ENCODE measurements at regions of chr2 and their contacts with region 1.

Region 1: GRCh38 chr2:241598480-241598879 is 38.5 kb downstream of the THAP4 start:
- DNase-seq: no peak
- H3K4me3 ChIP-seq: no peak overlapping the region
- H3K27ac ChIP-seq: no peak overlapping the region
- H3K4me1 ChIP-seq: no peaks in the 10 kb centered on the region
- H3K27me3 ChIP-seq: no peaks in the 10 kb centered on the region
- CTCF ChIP-seq: peak in 2 of 3 experiments; percentile 13 to 60

Region 2: GRCh38 chr2:241489733-241490680 is 108.5 kb before region 1 on chr2:
- dilution Hi-C with region 1: loop called (anchors 25 kb)
- DNase-seq: no peak
- H3K4me3 ChIP-seq: no peak overlapping the region
- H3K27ac ChIP-seq: no peak overlapping the region
- H3K4me1 ChIP-seq: no peaks in the 10 kb centered on the region
- H3K27me3 ChIP-seq: no peaks in the 10 kb centered on the region
- CTCF ChIP-seq: no peak

Region 3: DNA sequence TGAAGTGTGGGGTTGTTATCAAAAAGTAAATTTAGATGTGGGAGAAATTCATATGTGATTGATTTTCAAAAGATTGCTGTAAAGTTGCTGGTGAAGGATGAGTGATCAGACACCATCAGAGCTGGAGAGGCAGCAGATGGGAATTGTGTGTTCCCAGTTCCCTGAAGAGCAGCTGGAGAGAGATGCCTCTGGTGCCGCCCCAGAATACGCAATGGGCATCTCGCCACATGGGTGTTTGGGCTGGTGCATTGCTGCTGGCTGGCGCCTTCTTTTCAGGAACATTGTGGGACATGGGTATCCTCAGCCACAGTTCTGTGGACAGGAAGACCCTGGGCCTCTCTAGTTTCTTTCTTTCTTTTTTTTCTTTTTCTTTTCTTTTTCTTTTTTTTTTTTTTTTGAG is 50.9 kb after region 1 on chr2:
- dilution Hi-C with region 1: no loop called
- DNase-seq: no peak
- H3K4me3 ChIP-seq: no peak overlapping the region
- H3K27ac ChIP-seq: no peak overlapping the region
- H3K4me1 ChIP-seq: no peaks in the 10 kb centered on the region
- H3K27me3 ChIP-seq: no peaks in the 10 kb centered on the region
- CTCF ChIP-seq: no peak